B cell (primary cell): ENCODE measurements at regions of chr19 and their contacts with region 1.

Region 1: GRCh38 chr19:51607920-51608562 is 22.2 kb downstream of the SIGLEC5 start:
- DNase-seq: peak; percentile 85
- ATAC-seq: no peak
- H3K4me3 ChIP-seq: no peak overlapping the region
- H3K4me3 Mint-ChIP-seq: peak overlapping the region; percentile 82
- H3K27ac ChIP-seq: peak overlapping the region in 1 of 2 donors; percentile 82
- H3K27ac Mint-ChIP-seq: peak overlapping the region; percentile 95
- H3K4me1 ChIP-seq: peaks cover 36 to 37% of the 10 kb centered on the region in 2 donors
- H3K4me1 Mint-ChIP-seq: peaks cover 57% of the 10 kb centered on the region
- H3K27me3 ChIP-seq: no peaks in the 10 kb centered on the region
- H3K27me3 Mint-ChIP-seq: no peaks in the 10 kb centered on the region
- CTCF ChIP-seq: peak; percentile 55

Region 2: DNA sequence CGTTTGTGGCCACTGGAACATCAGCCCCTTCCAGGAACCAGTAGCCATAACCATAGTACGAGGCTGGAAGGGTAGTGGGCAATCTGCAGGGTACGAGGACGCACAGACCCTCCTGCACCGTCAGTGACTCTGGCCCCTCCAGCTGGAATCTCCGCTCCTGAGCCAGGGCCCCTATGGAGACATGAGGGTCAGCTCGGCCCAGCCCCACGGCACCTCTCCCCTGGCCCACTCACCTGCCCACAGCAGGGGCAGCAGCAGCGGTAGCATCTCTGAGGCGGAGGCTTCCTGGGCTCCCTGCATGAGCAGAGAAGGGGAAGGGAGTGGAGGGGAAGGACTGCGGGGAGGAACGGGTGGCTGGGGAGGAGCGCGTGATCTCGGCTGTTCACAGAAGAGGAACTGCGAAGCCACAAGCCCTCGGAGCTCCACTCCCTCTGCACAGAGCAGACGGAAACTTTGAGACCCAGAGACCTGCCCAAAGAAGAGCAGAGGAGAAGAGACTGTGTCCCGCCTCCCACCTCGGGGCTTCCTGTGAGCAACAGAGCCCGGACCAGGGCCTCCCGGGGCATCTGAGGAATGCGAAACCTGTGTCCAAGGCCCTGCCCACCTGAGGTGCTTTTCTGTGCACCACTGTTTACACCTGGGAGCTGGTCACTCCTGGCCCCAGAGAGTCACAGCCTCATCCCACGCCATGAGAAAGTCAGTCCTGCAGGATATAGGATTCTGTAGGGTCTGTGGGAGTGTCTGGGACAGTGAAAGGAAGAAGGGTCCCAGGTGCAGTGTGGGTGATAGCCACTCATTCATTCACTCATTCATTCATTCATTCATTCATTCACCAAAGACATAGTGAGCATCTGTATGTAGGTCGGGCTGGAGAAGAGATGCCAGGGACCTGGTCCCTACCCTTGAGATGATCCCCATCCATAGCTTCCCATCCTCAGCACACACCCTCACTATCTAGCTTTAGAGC is 76.4 kb before region 1 on chr19 and contains the start of gene SIGLEC6:
- CTCF ChIA-PET with region 1: interaction called, 3 read pairs
- POLR2A ChIA-PET with region 1: no interaction called
- intact Hi-C with region 1: loop called (anchors 2 kb)
- DNase-seq: peak; percentile 88
- ATAC-seq: peak; percentile 96
- H3K4me3 ChIP-seq: peak within 1 kb of the TSS in 4 of 5 experiments; percentile 51 to 60 (median 56)
- H3K4me3 Mint-ChIP-seq: peak within 1 kb of the TSS; percentile 88
- H3K27ac ChIP-seq: peak within 1 kb of the TSS; percentile 32 to 33
- H3K27ac Mint-ChIP-seq: peak within 1 kb of the TSS; percentile 83
- H3K4me1 ChIP-seq: peaks cover 25 to 41% of the 10 kb centered on the region in 2 donors
- H3K4me1 Mint-ChIP-seq: peaks cover 78% of the 10 kb centered on the region
- H3K27me3 ChIP-seq: no peaks in the 10 kb centered on the region
- H3K27me3 Mint-ChIP-seq: no peaks in the 10 kb centered on the region
- CTCF ChIP-seq: no peak
- total RNA-seq, gene SIGLEC6: 21.2 and 28.9 TPM in 2 replicates

Region 3: DNA sequence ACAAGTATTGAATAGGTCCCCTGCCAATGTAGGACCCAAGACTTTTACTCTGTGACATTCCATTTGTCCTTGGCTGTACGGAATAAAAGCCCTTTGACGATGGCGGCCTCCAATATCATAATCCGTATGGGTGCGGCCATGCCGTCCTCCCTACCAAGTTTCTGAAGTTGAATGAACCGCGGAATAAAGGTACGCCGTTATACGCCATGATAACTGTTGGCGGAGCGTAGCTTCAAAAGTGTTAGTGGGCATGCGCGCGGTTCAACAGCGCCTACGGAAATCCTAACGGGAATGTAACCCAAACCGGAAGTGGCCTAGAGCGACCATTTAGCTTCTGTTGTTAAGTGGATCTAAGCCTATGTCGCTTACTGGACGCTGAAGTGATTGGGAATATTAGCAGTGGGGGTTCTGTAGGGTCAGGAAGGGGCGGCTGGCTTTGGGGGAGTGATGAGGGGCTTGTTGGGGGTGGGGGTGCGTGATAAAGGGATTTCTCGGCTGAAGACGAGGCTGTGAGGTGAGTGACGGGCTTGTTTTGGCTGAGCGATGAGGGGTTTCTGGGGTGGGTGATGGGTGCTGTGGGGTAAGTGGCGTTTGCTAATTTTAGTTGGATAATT is 37.0 kb before region 1 on chr19 and contains the start of gene ZNF175:
- CTCF ChIA-PET with region 1: interaction called, 4 read pairs
- POLR2A ChIA-PET with region 1: interaction called, 5 read pairs
- intact Hi-C with region 1: loop called (anchors 1 kb)
- DNase-seq: peak; percentile 91
- ATAC-seq: peak; percentile 96
- H3K4me3 ChIP-seq: peak within 1 kb of the TSS; percentile 59 to 84 (median 81)
- H3K4me3 Mint-ChIP-seq: peak within 1 kb of the TSS; percentile 88
- H3K27ac ChIP-seq: peak within 1 kb of the TSS in 1 of 2 donors; percentile 59
- H3K27ac Mint-ChIP-seq: peak within 1 kb of the TSS; percentile 83
- H3K4me1 ChIP-seq: peaks cover 19% of the 10 kb centered on the region in 2 donors
- H3K4me1 Mint-ChIP-seq: peaks cover 38% of the 10 kb centered on the region
- H3K27me3 ChIP-seq: no peaks in the 10 kb centered on the region
- H3K27me3 Mint-ChIP-seq: no peaks in the 10 kb centered on the region
- CTCF ChIP-seq: no peak
- total RNA-seq, gene ZNF175: 31.3 and 33.0 TPM in 2 replicates

Region 4: DNA sequence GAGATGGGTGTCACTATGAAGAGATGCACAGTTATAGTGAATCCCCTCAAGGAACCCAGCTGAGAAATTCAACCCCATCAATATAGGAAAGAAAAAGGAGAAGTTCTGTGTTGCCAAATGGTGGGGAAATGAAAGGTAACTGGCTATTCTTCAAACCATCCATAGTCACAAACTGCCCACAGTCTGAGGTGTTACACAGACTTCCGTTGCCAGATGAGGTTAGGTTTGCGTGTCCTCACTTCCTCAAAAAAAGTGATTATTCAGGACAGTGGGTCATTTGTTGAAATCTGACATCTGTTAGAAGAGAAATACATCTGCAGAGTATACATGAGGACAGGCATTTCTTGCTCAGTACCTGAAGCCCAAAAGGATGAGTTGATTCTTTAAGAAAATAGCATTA is 13.1 kb after region 1 on chr19:
- CTCF ChIA-PET with region 1: interaction called, 3 read pairs
- POLR2A ChIA-PET with region 1: interaction called, 3 read pairs
- intact Hi-C with region 1: loop called (anchors 2 kb)
- DNase-seq: peak; percentile 66
- ATAC-seq: peak; percentile 73
- H3K4me3 ChIP-seq: no peak overlapping the region
- H3K4me3 Mint-ChIP-seq: no peak overlapping the region
- H3K27ac ChIP-seq: peak overlapping the region in 1 of 2 donors; percentile 56
- H3K27ac Mint-ChIP-seq: peak overlapping the region; percentile 59
- H3K4me1 ChIP-seq: peaks cover 12 to 22% of the 10 kb centered on the region in 2 donors
- H3K4me1 Mint-ChIP-seq: peaks cover 23% of the 10 kb centered on the region
- H3K27me3 ChIP-seq: no peaks in the 10 kb centered on the region
- H3K27me3 Mint-ChIP-seq: no peaks in the 10 kb centered on the region
- CTCF ChIP-seq: no peak

Region 5: GRCh38 chr19:51651216-51651846 is 43.3 kb after region 1 on chr19:
- CTCF ChIA-PET with region 1: interaction called, 9 read pairs
- POLR2A ChIA-PET with region 1: no interaction called
- intact Hi-C with region 1: loop called (anchors 2 kb)
- DNase-seq: peak; percentile 85
- ATAC-seq: peak; percentile 94
- H3K4me3 ChIP-seq: peak overlapping the region in 1 of 5 experiments; percentile 12
- H3K4me3 Mint-ChIP-seq: peak overlapping the region; percentile 73
- H3K27ac ChIP-seq: peak overlapping the region; percentile 70 to 87
- H3K27ac Mint-ChIP-seq: peak overlapping the region; percentile 87
- H3K4me1 ChIP-seq: peaks cover 43 to 50% of the 10 kb centered on the region in 2 donors
- H3K4me1 Mint-ChIP-seq: peaks cover 68% of the 10 kb centered on the region
- H3K27me3 ChIP-seq: no peaks in the 10 kb centered on the region
- H3K27me3 Mint-ChIP-seq: no peaks in the 10 kb centered on the region
- CTCF ChIP-seq: no peak